A549 (cell line): ENCODE measurements at regions of chr10 and their contacts with region 1.

Region 1: DNA sequence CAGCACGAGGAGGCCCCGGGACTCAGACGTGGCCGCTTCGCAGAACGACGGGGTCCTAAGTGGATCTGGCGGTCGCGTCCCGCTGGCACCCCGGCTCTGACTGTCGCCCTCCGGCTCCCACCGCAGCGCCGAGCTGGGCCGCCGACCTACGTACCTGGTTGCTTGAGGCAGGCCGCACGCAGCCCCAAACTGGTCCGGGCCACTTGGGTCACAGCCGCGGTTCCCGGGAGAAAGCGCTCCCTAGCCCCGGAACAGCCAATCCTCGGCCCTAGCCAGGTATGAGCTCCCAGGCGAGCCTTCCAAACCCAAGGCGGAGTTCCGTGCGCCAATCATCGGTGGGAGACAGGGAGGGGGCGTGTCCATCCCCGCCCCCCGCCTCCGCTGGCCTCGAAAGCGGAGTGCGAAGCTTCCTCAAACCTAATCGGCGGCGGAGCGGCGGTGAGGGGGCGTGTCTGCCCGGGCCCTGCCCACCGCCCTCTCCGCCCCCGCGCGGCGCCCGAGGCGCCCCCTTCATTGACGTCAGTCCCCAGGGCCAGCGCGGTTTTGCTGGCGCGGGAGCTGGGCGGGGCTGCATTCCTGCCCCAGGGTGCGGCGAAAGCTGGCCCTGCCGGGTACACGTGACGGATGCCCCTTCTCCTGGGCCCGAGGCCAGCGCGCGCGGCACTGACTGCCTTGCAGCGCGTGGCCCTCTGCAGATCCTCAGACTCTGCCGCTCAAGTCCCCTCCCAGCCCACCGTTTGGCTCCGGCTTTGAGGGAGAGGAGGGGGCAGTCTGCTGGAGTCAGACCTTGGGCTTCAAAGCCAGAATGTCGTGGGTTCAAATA is at the start of gene AVPI1:
- DNase-seq: peak; percentile 95 to 99
- ATAC-seq: peak; percentile 78 to 87
- H3K4me3 ChIP-seq: peak within 1 kb of the TSS; percentile 92
- H3K27ac ChIP-seq: peak within 1 kb of the TSS; percentile 94
- H3K4me1 ChIP-seq: peaks cover 62% of the 10 kb centered on the region
- CTCF ChIP-seq: no peak
- EP300 ChIP-seq: peak; percentile 73 to 94; a peak in 4 of 5 replicates
- POLR2A ChIP-seq: peak; percentile 84
- RAD21 ChIP-seq: no peak
- polyA plus RNA-seq, gene AVPI1: 48.7 and 64.1 TPM in 2 replicates

Region 2: DNA sequence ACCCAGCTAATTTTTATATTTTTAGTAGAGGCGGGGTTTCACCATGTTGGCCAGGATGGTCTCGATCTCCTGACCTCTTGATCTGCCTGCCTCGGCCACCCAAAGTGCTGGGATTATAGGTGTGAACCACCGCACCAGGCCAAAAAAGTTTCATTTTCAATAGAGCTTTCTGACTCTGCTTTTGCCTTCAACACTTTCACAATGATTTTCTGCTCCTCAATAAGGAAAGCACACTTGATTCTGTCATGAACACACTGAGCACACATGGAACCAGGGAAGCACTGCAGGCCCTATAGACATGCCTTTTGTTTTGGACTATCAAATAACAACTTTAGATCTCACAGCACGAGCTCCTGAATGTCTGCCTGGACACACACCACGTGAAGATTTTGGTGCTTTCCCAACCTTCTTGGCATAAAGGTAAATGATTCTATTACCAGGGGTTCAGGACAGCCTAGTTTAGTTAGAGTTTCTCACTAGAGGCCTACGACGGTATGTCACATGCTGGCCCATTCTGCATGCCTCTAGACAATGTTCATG is 294.1 kb before region 1 on chr10:
- CTCF ChIA-PET with region 1: no interaction called
- POLR2A ChIA-PET with region 1: no interaction called
- DNase-seq: no peak
- ATAC-seq: no peak
- H3K4me3 ChIP-seq: no peak overlapping the region
- H3K27ac ChIP-seq: no peak overlapping the region
- H3K4me1 ChIP-seq: no peaks in the 10 kb centered on the region
- CTCF ChIP-seq: no peak
- EP300 ChIP-seq: no peak
- POLR2A ChIP-seq: no peak
- RAD21 ChIP-seq: no peak

Region 3: DNA sequence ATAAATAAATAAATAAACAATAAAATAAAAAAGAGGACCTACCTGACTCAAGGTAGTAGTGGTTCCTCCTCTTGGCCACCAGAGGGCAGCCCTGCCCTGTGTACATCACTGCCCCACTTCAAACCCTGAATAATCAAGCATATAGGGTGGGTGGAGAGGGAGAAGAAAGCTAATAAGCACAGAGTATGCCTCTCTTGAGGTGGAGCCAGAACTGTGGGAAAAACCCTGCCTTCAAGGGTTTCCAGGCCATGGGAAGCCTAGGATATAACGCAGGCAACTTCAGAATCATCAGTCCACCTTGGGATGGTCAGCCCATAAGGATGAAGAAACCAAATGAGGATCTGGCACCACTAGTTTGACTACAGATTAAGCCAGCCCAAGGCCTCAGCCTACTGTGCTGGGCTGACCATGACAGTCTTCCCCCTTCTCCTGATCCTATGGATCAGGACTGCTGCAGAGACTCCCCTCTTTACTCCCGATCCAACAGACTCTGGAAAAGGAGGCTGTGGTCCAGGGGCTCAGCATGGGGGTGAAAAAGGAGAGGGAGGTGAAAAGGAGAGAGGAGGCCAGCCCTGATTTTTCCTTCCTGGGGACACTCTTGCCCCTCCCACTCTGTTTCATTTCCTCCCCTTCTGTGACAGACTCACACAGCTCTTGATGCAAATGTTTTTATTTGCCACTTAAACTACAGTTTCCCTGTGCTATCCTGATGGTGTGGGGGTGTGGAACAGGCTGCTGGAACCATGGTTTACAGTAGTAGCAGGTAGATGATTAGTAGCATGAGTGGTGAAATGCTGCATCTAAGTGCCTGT is 10.2 kb before region 1 on chr10:
- CTCF ChIA-PET with region 1: interaction called, 94 read pairs
- POLR2A ChIA-PET with region 1: interaction called, 11 read pairs
- DNase-seq: peak; percentile 77 to 83
- ATAC-seq: peak; percentile 57 to 74
- H3K4me3 ChIP-seq: no peak overlapping the region
- H3K27ac ChIP-seq: peak overlapping the region in 1 of 2 experiments; percentile 38; a peak in 1 of 6 replicates
- H3K4me1 ChIP-seq: peaks cover 26% of the 10 kb centered on the region
- CTCF ChIP-seq: peak; percentile 91
- EP300 ChIP-seq: no peak
- POLR2A ChIP-seq: no peak
- RAD21 ChIP-seq: peak; percentile 87

Region 4: DNA sequence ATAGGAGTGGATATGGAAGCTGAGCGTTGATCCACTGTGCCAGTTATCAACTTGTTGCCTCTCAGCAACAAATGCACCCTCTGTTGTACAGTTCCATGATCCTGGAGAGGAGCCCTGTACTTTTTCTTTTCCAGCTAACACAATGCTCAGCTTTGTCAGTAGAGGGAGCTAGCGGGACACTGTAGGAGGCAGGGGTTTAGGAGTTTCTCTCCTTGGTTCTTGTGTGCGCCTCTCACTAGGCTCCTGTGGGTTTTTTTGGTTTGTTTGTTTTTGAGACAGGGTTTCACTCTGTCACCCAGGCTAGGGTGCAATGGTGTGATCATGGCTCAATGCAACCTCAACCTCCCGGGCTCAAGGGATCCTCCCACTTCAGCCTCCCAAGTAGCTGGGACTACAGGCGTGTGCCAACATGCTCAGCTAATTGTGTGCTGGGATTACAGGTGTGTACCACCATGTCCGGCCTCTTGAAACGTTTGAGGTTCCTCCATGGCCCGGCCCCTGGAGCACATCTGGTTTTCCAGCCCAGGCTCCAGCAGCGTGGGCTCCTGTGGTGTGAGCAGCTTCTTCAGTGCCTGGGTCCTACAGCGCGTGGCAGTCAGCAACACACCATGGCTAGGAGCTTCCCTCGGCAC is 14.4 kb after region 1 on chr10:
- CTCF ChIA-PET with region 1: interaction called, 1,127 read pairs
- POLR2A ChIA-PET with region 1: interaction called, 40 read pairs
- DNase-seq: peak; percentile 74 to 88
- ATAC-seq: peak; percentile 94 to 97
- H3K4me3 ChIP-seq: no peak overlapping the region
- H3K27ac ChIP-seq: peak overlapping the region; percentile 63 to 74
- H3K4me1 ChIP-seq: peaks cover 12% of the 10 kb centered on the region
- CTCF ChIP-seq: peak; percentile 88
- EP300 ChIP-seq: no peak
- POLR2A ChIP-seq: no peak
- RAD21 ChIP-seq: peak; percentile 76 to 89

Region 5: DNA sequence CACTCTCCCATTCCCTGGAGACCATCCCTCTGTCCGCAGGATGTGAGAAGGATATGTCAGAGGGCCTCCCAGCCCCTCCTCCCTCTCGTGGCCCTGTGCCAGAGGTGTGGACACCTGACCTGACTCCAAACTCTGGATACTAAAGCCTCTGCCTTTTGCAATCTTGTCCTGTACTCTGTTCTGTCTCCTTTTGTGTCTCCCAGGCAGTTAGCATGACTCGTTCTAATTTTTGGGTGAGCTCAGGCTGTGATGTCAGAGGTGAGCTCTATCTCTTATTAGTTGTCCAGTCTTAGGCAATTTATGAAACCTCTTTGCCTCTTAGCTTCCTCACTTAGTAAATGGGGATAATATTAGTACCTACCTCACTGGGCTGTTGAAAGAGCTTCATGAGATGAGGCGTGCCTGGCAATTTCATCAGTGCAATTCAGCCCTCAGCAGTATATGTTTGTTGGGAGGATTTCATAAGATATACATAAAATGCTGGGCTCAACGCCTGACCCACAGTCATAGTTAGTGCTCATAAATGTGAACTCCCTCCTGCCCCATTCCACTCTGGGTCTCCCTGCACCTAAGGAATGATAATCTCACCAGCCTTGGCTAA is 37.3 kb after region 1 on chr10:
- CTCF ChIA-PET with region 1: interaction called, 1,127 read pairs
- POLR2A ChIA-PET with region 1: interaction called, 15 read pairs
- DNase-seq: peak in 1 of 2 experiments; percentile 50
- ATAC-seq: peak; percentile 60 to 81
- H3K4me3 ChIP-seq: no peak overlapping the region
- H3K27ac ChIP-seq: peak overlapping the region; percentile 43 to 45; a peak in 4 of 6 replicates
- H3K4me1 ChIP-seq: peaks cover 27% of the 10 kb centered on the region
- CTCF ChIP-seq: no peak
- EP300 ChIP-seq: no peak
- POLR2A ChIP-seq: no peak
- RAD21 ChIP-seq: no peak

Region 6: DNA sequence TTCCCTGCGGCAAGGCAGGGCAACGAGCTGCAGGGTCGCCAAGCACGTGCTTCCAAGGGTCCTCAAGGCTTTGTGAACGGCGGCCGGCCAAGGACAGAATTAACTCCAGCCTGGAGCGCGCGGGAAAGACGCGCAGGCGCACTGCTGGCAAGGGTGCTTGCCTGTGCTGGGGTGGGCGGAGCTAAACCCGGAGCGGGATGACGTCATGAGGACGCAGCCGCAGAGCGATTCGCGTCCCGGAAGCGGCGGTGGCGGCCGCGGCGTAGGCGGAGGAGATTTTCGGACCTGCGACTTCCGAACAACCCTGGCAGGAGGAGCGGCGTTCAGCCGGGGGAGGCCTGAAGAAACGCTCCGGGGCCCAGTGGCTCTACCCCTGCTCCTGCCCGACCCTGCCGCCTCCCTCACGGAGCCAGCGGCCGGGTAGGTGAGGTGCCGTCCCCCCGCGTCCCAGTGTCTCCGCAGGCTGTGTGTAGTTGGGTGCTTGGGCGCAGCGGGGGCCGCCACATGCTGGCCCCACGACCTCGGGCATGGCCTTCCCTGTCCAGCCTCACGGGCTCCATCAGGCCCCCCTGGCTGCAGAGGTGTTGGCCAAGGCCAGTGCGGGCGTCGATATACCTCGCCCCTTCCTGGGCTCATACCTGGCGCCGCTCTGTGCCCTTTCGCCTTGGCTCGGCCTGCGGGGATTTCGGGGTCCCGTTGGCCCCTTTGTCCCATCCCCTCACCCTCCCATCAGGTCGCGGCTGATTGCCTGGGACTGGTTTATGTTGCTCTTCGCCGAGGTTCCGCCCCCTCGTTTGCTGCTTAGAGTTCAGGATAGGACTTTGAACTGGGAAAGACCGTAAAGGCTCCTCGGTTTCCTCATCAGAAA is 50.0 kb after region 1 on chr10 and contains the start of gene ZFYVE27:
- CTCF ChIA-PET with region 1: interaction called, 1,127 read pairs
- POLR2A ChIA-PET with region 1: interaction called, 32 read pairs
- DNase-seq: peak; percentile 96 to 98
- ATAC-seq: peak; percentile 78 to 91
- H3K4me3 ChIP-seq: peak within 1 kb of the TSS; percentile 86
- H3K27ac ChIP-seq: peak within 1 kb of the TSS; percentile 86 to 98
- H3K4me1 ChIP-seq: peaks cover 9% of the 10 kb centered on the region; the same call in 2 of the 3 replicates
- CTCF ChIP-seq: no peak
- EP300 ChIP-seq: no peak
- POLR2A ChIP-seq: peak; percentile 91
- RAD21 ChIP-seq: no peak
- polyA plus RNA-seq, gene ZFYVE27: 17.1 and 20.2 TPM in 2 replicates